Right ventricle myocardium inferior (tissue), 1 donor: ENCODE measurements at regions of chr20 and their contacts with region 1.

Region 1: GRCh38 chr20:4108495-4109306 is 93.3 kb upstream of the RNF24 start:
- DNase-seq: no peak
- ATAC-seq: peak; percentile 85

Region 2: DNA sequence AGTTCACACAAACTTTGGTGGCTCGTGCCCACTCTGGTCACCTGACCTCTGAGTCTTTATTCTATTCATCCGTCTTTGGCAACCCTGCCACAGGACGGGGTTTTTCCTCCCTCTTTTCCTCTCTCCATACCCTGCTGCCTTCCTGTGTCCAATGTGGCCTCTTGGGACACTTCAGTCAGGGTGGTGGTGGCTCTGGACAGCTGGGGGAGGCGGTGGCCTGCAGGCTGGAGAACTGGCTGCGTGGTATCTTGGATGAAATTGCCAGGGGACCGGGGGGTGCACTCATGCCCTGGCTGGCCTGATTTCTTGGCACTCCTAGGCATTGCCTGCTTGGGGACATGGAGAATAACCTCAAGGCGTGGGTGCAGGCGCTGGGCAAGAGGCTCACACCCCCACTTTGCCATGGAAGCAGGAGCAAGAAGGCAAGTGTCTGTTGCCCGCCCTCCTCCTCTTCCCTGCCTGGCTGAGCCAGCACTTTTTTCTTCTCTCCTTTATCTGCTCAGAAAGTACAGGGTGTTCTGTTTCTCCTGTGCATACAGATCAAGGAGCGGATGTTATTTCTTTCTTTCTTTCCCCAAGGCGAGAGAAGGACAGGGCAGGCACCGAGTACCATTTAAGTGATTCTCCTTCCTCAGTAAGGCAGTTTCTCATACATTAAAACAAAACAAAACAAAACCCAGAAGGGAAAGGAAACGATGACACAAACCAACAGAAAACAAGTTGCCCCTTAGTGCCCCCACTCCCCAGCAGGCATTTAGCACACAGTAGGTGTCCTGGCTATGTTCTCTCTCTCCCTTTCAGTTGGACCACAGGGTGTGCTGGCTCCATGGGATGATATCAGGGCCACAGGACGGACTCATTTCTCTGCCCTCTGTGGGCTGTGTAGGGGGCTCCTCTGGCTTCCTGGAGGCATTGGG is 62.2 kb after region 1 on chr20:
- intact Hi-C with region 1: loop called (anchors 1 kb)
- DNase-seq: no peak
- ATAC-seq: no peak

Region 3: DNA sequence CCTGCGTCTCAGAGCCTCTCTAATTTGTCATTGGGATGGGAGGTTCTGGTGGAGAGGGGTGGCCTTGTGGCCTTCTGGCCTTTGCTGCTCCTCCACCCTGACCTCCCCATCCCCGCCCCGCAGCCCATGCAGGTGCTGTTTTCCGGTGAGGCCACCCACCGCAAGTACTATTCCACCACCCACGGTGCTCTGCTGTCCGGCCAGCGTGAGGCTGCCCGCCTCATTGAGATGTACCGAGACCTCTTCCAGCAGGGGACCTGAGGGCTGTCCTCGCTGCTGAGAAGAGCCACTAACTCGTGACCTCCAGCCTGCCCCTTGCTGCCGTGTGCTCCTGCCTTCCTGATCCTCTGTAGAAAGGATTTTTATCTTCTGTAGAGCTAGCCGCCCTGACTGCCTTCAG is 78.4 kb after region 1 on chr20:
- intact Hi-C with region 1: no loop called
- DNase-seq: no peak
- ATAC-seq: no peak

Region 4: GRCh38 chr20:4592316-4593148 is 483.8 kb after region 1 on chr20:
- intact Hi-C with region 1: loop called (anchors 2 kb)
- DNase-seq: peak; percentile 77
- ATAC-seq: peak; percentile 83